GM13977 (cell line): ENCODE measurements at regions of chr20 and their contacts with region 1.

Region 1: DNA sequence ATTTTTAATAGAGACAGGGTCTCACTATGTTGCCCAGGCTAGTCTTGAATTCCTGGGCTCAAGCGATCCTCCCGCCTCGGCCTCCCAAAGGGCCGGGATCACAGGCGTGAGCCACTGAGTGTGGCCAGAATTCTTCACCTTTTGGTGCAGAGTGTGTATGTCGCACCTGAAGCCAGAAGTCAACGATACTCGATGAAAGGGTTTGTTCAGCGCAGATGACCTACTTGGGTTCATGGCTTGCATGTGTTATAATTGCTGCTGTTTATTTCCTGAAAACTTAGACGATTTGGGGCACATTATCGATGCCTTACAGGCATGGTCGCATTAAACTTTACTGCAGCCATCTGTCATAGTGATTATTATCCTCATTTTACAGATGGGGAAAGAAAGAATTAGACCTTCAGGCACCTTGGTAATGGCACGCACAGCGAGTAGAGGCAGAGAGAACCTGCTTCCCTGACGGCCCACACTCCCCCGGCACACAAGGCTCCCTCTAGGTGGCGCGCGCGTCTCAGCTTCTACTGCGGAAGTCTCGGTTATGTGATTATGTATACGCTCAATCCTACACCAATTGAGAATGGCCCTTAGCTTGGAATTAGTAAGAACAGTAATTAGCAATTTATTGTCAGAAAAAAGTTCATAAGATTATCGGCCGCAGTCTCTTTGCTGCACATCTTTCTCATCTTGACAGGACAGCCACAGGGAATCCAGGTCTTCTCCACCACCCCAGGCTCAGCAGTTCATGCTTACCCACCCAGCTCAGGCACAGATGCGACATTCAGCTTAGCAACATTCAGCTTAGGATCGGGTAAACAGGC is 212.8 kb upstream of the PROKR2 start:
- DNase-seq: peak; percentile 60
- CTCF ChIP-seq: peak; percentile 96

Region 2: GRCh38 chr20:5586720-5587119 is 57.2 kb after region 1 on chr20:
- in situ Hi-C with region 1: no loop called
- DNase-seq: peak; percentile 25
- CTCF ChIP-seq: no peak

Region 3: DNA sequence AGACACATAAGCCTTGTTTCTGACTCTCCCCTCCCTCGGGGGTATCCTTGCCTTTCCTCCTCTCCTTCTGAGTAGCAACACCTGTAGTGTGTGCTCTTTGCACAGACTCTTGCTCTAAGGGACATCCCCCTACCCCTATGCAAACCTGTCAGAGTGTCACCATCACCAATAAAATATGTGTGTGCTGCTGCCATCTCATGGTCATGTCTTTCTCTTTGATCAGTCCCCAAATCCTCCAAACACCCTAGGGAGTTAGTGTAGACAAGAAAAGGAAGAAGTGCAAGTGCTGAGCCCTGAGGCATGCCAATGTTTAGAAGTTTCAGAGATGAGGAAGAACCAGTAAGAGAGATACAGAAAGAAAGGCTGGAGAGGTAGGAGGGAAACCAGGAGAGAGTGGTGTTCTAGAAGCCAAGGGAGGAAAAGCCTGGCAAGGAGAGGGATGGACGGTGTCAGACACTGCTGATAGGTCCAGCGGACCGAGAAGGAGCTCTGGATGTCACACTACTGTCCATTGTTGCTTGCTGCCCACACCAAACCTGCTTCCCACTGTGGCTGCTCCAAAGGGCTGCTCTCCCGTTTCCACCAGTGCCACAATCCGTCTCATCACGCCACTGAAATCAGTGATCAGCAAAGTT is 404.4 kb after region 1 on chr20:
- in situ Hi-C with region 1: loop called (anchors 25 kb)
- DNase-seq: peak; percentile 48
- CTCF ChIP-seq: peak; percentile 51

Region 4: GRCh38 chr20:6081236-6081635 is 551.7 kb after region 1 on chr20:
- in situ Hi-C with region 1: loop called (anchors 10 kb)
- DNase-seq: no peak
- CTCF ChIP-seq: no peak